Activated naive CD4-positive, alpha-beta T cell treated with anti-CD3 and anti-CD28 coated beads for 36 hours (primary cell): ENCODE measurements at regions of chr1 and their contacts with region 1.

Region 1: DNA sequence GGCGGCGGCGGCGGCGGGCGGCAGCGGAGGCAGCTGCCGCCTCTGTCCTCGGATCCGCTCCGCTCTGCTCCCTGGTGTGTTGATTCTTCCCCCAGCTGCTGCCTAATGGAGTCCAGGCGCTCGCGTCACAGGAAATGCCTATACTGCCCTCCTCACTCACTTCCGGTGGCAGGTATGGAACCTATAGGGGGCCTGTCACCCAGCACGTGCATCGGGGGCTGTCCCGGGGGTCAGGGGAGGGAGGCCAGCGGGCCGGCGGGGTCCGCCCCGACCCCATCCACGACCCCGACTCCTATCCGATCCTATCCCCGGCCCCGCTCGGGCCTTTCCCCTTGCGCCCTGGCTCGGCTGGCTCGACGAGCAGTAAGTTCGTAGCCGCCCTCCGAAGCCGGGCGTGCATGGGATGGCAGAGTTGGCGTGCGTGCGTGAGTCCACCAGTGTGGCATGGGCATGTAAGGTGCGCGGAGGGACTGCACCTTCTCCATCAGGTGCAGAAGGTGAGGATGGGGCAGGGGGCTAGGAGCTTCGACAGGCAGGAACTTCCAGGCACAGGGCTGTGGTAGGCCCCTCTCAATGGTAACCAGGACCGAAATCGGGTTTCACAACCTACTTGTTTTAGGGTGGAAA is at the start of gene WDR26:
- DNase-seq: peak; percentile 91
- H3K4me3 Mint-ChIP-seq: peak within 1 kb of the TSS; percentile 95
- H3K27ac Mint-ChIP-seq: peak within 1 kb of the TSS; percentile 95
- H3K4me1 Mint-ChIP-seq: peaks cover 46% of the 10 kb centered on the region
- H3K27me3 Mint-ChIP-seq: no peaks in the 10 kb centered on the region
- total RNA-seq, gene WDR26: 44.3 to 45.4 TPM

Region 2: DNA sequence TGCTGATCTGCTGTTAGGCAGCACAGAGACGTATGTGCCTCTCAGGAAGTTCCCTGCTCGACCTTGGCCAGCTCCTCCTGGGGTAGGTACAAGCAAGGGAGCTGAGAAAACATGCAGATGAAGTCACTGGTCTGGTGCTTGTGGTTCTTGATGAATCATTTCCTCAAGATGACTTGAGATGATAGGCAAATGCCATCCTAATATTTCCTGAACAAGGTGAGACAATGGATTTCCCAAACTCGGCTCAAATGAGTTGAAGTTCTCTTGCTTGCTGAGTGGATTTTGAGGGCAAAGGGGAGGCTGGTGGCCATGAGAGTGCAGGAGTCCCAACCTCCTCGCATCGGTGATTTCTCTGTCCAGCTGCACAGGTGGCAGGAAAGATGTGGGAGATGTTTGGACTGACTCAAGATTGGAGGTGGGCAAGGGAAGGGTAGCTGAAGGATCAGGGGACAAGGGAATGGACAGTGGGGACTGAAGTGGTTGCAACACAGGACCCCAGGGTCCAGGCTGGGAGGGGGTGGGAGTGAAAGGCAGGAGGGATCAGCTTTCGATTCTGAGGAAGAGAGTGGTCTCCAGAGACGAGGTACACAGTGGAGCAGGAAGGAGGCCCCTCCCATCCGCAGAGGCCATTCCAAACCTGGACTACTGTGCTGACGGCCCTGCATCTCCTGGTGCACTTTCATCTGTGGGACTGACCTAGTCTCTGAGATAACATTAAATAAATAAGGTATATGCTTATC is 658.6 kb before region 1 on chr1:
- CTCF ChIA-PET with region 1: no interaction called
- intact Hi-C with region 1: loop called (anchors 5 kb)
- DNase-seq: peak; percentile 83
- H3K4me3 Mint-ChIP-seq: peak overlapping the region; percentile 10
- H3K27ac Mint-ChIP-seq: peak overlapping the region; percentile 86
- H3K4me1 Mint-ChIP-seq: peaks cover 41% of the 10 kb centered on the region
- H3K27me3 Mint-ChIP-seq: no peaks in the 10 kb centered on the region

Region 3: GRCh38 chr1:224329842-224330753 is 104.7 kb before region 1 on chr1 and contains the start of gene NVL:
- CTCF ChIA-PET with region 1: no interaction called
- intact Hi-C with region 1: loop called (anchors 1 kb)
- DNase-seq: peak; percentile 89
- H3K4me3 Mint-ChIP-seq: peak within 1 kb of the TSS; percentile 98
- H3K27ac Mint-ChIP-seq: peak within 1 kb of the TSS; percentile 98
- H3K4me1 Mint-ChIP-seq: peaks cover 38% of the 10 kb centered on the region
- H3K27me3 Mint-ChIP-seq: no peaks in the 10 kb centered on the region
- total RNA-seq, gene NVL: 26.7 to 29.9 TPM

Region 4: DNA sequence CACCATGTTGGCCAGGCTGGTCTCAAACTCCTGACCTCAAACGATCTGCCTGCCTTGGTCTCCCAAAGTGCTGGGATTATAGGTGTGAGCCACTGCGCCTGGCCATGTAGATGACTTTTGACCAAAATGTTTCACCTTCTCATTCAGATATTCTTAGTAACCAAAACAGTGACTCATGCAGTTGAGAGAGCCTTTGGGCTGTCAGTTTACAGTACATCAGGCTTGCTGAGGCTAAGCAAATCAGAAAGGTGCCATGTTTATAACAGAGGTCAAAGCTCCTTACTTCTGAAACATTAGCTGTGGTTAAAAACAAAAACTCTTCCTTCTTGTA is 57.2 kb before region 1 on chr1:
- CTCF ChIA-PET with region 1: interaction called, 3 read pairs
- intact Hi-C with region 1: loop called (anchors 1 kb)
- DNase-seq: peak; percentile 66
- H3K4me3 Mint-ChIP-seq: no peak overlapping the region
- H3K27ac Mint-ChIP-seq: peak overlapping the region; percentile 67
- H3K4me1 Mint-ChIP-seq: peaks cover 91% of the 10 kb centered on the region
- H3K27me3 Mint-ChIP-seq: no peaks in the 10 kb centered on the region

Region 5: GRCh38 chr1:224497714-224498573 is 63.1 kb after region 1 on chr1:
- CTCF ChIA-PET with region 1: interaction called, 6 read pairs
- intact Hi-C with region 1: loop called (anchors 1 kb)
- DNase-seq: peak; percentile 91
- H3K4me3 Mint-ChIP-seq: peak overlapping the region; percentile 54
- H3K27ac Mint-ChIP-seq: peak overlapping the region; percentile 92
- H3K4me1 Mint-ChIP-seq: peaks cover 40% of the 10 kb centered on the region
- H3K27me3 Mint-ChIP-seq: peaks cover 7% of the 10 kb centered on the region